ENCODE measurements at regions of chr17 and their contacts with region 1.

Region 1: GRCh38 chr17:43760254-43760852 is 1.8 kb upstream of the SOST start:
- DNase-seq: peak; percentile 65
- H3K4me3 ChIP-seq: no peak overlapping the region
- CTCF ChIP-seq: peak; percentile 94

Region 2: GRCh38 chr17:43570518-43570928 is 189.8 kb before region 1 on chr17:
- CTCF ChIA-PET with region 1: interaction called, 122 read pairs
- POLR2A ChIA-PET with region 1: no interaction called
- DNase-seq: no peak
- H3K4me3 ChIP-seq: no peak overlapping the region
- CTCF ChIP-seq: no peak

Region 3: DNA sequence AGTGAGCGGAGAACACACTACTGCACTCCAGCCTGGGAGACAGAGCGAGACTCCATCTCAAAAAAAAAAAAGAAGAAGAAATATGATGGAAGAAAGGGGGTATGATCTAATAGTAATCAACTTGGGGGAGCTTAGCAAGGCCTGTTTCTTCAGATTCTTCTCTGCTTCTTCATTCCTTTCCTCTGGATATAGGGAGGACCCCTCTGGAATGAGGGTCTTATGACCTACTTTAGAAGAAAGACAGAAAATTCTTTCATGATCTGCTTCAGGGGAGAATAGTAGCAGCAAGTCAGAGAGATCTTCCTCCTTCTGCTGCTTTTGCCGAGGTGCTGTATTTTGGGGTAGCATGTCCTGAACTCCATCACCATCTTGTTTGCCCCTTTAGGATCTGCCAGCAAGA is 169.4 kb before region 1 on chr17:
- CTCF ChIA-PET with region 1: no interaction called
- POLR2A ChIA-PET with region 1: no interaction called
- DNase-seq: no peak
- H3K4me3 ChIP-seq: no peak overlapping the region
- CTCF ChIP-seq: no peak

Region 4: GRCh38 chr17:43713494-43714162 is 46.7 kb before region 1 on chr17:
- CTCF ChIA-PET with region 1: interaction called, 1,463 read pairs
- POLR2A ChIA-PET with region 1: no interaction called
- DNase-seq: no peak
- H3K4me3 ChIP-seq: peak overlapping the region; percentile 52
- CTCF ChIP-seq: no peak

Region 5: DNA sequence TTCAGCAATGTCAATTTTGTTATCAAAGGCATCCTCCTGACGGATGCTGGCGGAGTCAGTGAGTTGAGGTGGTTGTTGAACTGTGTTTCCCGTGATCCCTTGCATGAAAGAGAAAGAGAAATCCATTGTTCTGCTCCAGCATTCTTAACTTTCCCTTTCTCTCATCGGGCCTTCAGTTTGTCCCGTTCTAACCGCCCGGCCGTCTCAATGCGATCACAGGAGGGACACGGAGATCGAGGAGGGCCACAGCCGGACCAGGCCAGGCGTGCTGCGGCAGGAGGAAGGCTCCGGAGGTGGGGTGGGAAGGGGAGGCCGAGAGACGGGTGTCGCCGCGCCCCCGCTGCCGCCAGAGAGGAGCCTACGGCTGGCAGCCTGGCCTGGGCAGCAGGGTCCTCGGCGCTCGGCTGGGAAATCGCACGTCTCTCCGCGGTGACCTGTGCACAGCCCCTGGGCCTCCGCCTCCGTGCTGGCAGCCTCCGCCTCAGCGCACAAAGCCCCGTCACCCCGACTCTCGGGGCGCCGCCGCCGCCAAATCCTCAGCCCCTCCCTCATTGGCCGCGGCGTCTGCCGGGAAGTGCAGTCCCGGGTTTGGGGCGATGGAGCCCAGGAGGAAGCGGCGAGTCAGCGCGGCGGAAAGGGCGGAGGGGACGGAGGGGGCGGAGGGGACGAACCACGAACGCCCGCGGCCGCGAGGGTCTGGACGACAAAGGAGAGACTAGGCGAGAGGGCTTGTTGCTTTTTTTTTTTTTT is 39.9 kb before region 1 on chr17:
- CTCF ChIA-PET with region 1: interaction called, 28 read pairs
- POLR2A ChIA-PET with region 1: no interaction called
- DNase-seq: no peak
- H3K4me3 ChIP-seq: peak overlapping the region; percentile 58
- CTCF ChIP-seq: no peak

Region 6: DNA sequence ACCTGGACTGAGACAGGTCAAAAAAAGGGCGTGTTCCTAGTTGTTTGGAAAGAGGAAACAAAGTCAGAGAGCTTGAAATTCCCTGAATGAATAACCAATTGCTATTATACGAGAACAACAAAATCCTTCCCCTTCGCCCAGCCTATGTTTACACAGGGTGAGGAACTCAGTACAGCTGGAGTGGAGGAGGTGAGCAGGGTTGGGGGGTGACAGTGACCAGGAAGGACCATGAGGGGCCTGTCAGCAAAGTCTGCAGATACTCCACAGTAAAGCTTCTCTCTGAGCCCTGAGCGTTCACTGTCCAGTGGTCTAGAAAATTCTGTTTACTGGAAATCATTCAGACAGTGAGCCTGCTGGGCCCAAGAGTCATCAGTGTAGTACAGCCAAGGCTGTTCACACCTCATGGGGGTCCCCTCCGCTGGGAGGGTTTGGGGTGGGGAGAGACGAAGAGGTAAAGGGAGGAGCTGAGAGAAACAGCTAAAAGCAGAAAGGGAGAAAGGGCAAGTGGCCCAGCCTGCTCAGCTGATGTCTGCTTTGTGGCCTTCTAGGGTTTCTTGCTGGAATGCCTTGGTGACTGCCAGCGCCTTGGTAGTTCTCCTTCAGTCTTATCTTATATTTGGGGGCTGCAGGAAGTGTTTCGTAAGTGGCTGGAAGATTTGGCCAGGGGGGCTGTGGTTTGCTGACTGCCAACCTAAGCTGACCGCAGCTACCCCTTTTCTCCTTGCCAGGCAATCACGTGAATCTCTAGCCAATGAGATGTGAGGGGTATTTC is 12.7 kb after region 1 on chr17:
- CTCF ChIA-PET with region 1: interaction called, 342 read pairs
- POLR2A ChIA-PET with region 1: no interaction called
- DNase-seq: no peak
- H3K4me3 ChIP-seq: no peak overlapping the region
- CTCF ChIP-seq: no peak